ENCODE measurements at regions of chr4 and their contacts with region 1.

Region 1: DNA sequence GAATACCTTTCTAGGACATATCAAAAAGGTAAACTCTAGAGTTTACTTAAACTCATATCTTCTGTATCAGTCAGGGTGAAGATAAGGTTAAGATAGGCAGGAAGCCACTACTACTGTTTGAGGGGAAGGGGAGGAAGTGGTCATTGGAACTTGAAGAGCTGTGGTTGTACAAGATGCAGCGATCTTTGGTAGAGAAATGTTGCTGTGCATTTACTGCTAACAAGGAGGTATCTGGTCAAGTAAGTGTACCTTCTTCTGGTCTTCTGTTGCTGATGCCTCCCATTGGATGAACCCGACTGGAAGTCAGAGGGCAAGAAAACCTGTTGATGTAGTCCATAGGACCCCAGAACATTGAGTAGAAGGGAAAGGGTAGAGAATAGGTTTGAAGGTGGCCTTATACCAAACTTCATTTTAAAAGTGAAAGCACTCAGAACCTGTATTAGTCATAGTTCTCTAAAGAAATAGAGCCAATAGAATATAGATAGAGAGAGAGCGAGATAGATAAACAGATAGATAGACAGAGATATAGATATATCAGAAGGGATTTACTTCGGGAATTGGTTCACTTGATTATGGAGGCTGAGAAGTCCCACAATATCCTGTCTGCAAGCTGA is 47.9 kb upstream of the TSPAN5 start:
- DNase-seq: peak; percentile 56
- H3K4me3 Mint-ChIP-seq: peak overlapping the region; percentile 68
- H3K27ac Mint-ChIP-seq: peak overlapping the region; percentile 87
- H3K4me1 Mint-ChIP-seq: peaks cover 24% of the 10 kb centered on the region
- H3K27me3 Mint-ChIP-seq: no peaks in the 10 kb centered on the region

Region 2: DNA sequence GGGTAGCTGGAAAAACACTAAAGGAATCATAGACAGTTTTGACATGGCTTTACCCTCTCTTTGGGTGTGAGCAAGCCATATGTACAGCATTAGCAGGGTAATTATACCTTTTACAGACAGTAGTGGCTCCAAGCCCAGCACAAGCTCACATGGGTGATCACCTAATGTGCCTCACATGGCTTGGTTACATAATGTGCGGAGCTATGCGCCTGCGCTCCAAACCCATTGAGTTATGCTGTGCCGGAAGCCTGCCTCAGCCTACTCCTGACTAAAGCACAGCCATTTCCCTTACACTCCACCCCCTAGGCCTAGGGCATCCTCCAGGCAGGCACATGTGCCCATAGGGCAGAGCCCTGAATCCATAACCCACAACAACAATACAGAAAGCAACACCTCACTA is 41.3 kb before region 1 on chr4:
- CTCF ChIA-PET with region 1: no interaction called
- POLR2A ChIA-PET with region 1: no interaction called
- DNase-seq: no peak
- H3K4me3 Mint-ChIP-seq: no peak overlapping the region
- H3K27ac Mint-ChIP-seq: peak overlapping the region; percentile 79
- H3K4me1 Mint-ChIP-seq: peaks cover 39% of the 10 kb centered on the region
- H3K27me3 Mint-ChIP-seq: no peaks in the 10 kb centered on the region

Region 3: GRCh38 chr4:98688411-98689290 is 17.7 kb before region 1 on chr4:
- CTCF ChIA-PET with region 1: interaction called, 3 read pairs
- POLR2A ChIA-PET with region 1: interaction called, 10 read pairs
- DNase-seq: peak; percentile 45
- H3K4me3 Mint-ChIP-seq: no peak overlapping the region
- H3K27ac Mint-ChIP-seq: peak overlapping the region; percentile 5
- H3K4me1 Mint-ChIP-seq: peaks cover 25% of the 10 kb centered on the region
- H3K27me3 Mint-ChIP-seq: no peaks in the 10 kb centered on the region

Region 4: GRCh38 chr4:98728433-98728832 is 22.1 kb after region 1 on chr4:
- CTCF ChIA-PET with region 1: no interaction called
- POLR2A ChIA-PET with region 1: no interaction called
- DNase-seq: no peak
- H3K4me3 Mint-ChIP-seq: no peak overlapping the region
- H3K27ac Mint-ChIP-seq: no peak overlapping the region
- H3K4me1 Mint-ChIP-seq: peaks cover 6% of the 10 kb centered on the region
- H3K27me3 Mint-ChIP-seq: no peaks in the 10 kb centered on the region

Measured in activated CD4-positive, alpha-beta memory T cell treated with anti-CD3 and anti-CD28 coated beads, Interleukin-2, amount 10 ng/mL, durations not matched to agents 7 days and 5 days (primary cell).